SK-N-SH (cell line): ENCODE measurements at regions of chr15 and their contacts with region 1.

Region 1: DNA sequence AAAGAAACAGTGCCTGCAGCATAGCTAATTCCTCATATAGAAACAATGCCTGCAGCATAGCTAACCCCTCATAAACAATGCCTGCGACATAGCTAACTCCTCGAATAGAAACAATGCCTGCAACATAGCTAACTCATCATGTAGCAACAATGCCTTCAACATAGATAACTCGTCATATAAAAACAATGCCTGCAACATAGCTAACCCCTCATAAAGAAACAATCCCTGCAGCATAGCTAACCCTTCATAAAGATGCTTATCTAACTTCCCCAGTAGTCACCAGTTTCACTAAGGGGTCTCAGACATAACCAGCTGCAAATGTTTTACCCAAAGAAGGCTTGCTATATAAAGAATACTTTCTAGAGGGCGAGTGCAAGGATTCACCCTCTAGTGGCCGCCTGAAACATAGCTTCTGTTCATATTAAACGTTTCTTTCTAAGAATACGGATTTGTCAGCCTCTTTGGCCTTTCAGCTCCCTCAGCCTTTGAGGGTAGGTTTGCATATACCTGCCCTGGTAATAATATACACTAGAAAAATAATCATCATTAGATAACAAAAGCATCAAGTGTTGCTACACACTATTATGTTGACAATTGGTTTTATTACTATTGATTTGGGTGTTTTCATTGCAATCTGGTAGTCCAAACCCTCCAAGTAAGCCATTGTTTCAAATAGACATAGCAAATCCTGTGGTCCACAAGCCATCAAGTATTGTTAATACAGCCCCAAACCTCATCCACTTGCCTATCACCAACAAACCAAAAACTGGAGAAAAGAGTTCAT is 44.4 kb upstream of the FAN1 start:
- DNase-seq: peak; percentile 47
- H3K4me3 ChIP-seq: no peak overlapping the region; a peak in 1 of 4 replicates
- H3K27ac ChIP-seq: no peak overlapping the region
- H3K4me1 ChIP-seq: no peaks in the 10 kb centered on the region
- H3K27me3 ChIP-seq: no peaks in the 10 kb centered on the region
- CTCF ChIP-seq: peak; percentile 72
- EP300 ChIP-seq: no peak
- RAD21 ChIP-seq: peak; percentile 58

Region 2: GRCh38 chr15:30827625-30828288 is 31.5 kb before region 1 on chr15:
- CTCF ChIA-PET with region 1: interaction called, 12 read pairs
- POLR2A ChIA-PET with region 1: no interaction called
- DNase-seq: no peak
- H3K4me3 ChIP-seq: no peak overlapping the region
- H3K27ac ChIP-seq: no peak overlapping the region
- H3K4me1 ChIP-seq: no peaks in the 10 kb centered on the region; a peak in 1 of 4 replicates
- H3K27me3 ChIP-seq: no peaks in the 10 kb centered on the region
- CTCF ChIP-seq: no peak
- EP300 ChIP-seq: no peak
- RAD21 ChIP-seq: no peak

Region 3: DNA sequence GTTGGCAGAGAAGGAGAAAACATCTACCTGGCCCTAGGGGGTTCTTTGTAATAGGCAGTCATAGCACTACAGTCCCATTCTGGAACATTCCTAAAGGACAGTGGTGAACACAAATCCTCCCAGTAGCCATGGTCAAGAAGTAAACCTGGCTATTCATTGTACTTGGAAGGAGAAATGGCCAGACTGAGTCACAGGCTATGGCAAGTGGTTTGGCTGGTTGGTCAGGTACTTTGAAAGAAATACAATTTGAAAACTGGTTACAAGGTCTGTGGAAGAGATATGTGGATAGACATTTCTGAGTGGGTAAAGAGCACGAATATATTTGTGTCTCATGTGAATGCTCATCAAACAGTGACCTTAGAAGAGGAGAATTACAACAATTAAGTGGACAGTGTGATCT is 11.4 kb after region 1 on chr15:
- CTCF ChIA-PET with region 1: interaction called, 26 read pairs
- POLR2A ChIA-PET with region 1: no interaction called
- DNase-seq: no peak
- H3K4me3 ChIP-seq: no peak overlapping the region
- H3K27ac ChIP-seq: no peak overlapping the region
- H3K4me1 ChIP-seq: no peaks in the 10 kb centered on the region
- H3K27me3 ChIP-seq: no peaks in the 10 kb centered on the region
- CTCF ChIP-seq: no peak
- EP300 ChIP-seq: no peak
- RAD21 ChIP-seq: no peak

Region 4: DNA sequence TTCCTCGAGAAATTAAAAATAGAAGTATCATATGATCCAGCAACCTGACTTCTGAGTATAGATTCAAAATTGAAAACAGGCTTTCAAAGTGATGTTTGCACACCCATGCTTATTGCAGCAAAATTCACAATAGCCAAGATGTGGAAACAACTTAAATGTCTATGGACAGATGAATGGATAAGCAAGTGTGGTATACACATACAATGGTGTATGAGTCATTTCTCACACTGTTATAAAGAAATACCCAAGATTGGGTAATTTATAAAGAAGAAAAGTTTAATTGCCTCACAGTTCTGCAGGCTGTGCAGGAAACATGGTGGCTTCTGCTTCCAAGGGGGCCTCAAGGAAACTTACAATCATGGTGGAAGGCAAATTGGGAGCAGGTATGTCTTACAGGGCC is 568.1 kb after region 1 on chr15:
- CTCF ChIA-PET with region 1: no interaction called
- POLR2A ChIA-PET with region 1: no interaction called
- DNase-seq: no peak
- H3K4me3 ChIP-seq: no peak overlapping the region
- H3K27ac ChIP-seq: no peak overlapping the region
- H3K4me1 ChIP-seq: no peaks in the 10 kb centered on the region
- H3K27me3 ChIP-seq: no peaks in the 10 kb centered on the region; the same call in 1 of the 2 replicates
- CTCF ChIP-seq: no peak
- EP300 ChIP-seq: no peak
- RAD21 ChIP-seq: no peak